PC-9 (cell line): ENCODE measurements at regions of chr22 and their contacts with region 1.

Region 1: GRCh38 chr22:35589071-35589952 is 27.8 kb downstream of the MB start:
- DNase-seq: peak; percentile 96 to 100
- H3K4me3 ChIP-seq: peak overlapping the region; percentile 62; the same call in 1 of the 2 replicates
- H3K27ac ChIP-seq: peak overlapping the region; percentile 98
- H3K4me1 ChIP-seq: peaks cover 90% of the 10 kb centered on the region
- H3K27me3 ChIP-seq: no peaks in the 10 kb centered on the region
- CTCF ChIP-seq: no peak

Region 2: GRCh38 chr22:35299673-35300497 is 289.4 kb before region 1 on chr22 and contains the start of gene TOM1:
- CTCF ChIA-PET with region 1: no interaction called
- POLR2A ChIA-PET with region 1: no interaction called
- intact Hi-C with region 1: loop called (anchors 1 kb)
- DNase-seq: peak; percentile 96
- H3K4me3 ChIP-seq: peak within 1 kb of the TSS; percentile 75
- H3K27ac ChIP-seq: peak within 1 kb of the TSS; percentile 91
- H3K4me1 ChIP-seq: peaks cover 30% of the 10 kb centered on the region
- H3K27me3 ChIP-seq: no peaks in the 10 kb centered on the region
- CTCF ChIP-seq: no peak
- total RNA-seq, gene TOM1: 43.6 and 45.1 TPM in 2 replicates

Region 3: DNA sequence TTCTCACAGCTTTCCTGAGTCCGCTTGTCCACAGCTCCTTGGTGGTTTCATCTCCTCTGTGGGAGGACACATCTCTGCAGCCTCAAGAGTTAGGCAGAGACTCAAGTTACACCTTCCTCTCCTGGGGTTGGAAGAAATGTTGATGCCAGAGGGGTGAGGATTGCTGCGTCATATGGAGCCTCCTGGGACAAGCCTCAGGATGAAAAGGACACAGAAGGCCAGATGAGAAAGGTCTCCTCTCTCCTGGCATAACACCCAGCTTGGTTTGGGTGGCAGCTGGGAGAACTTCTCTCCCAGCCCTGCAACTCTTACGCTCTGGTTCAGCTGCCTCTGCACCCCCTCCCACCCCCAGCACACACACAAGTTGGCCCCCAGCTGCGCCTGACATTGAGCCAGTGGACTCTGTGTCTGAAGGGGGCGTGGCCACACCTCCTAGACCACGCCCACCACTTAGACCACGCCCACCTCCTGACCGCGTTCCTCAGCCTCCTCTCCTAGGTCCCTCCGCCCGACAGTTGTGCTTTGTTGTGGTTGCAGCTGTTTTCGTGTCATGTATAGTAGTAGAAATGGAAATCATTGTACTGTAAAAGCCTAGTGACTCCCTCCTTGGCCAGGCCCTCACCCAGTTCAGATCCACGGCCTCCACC is 37.0 kb before region 1 on chr22:
- CTCF ChIA-PET with region 1: no interaction called
- POLR2A ChIA-PET with region 1: no interaction called
- intact Hi-C with region 1: no loop called
- DNase-seq: peak in 1 of 2 experiments; percentile 51
- H3K4me3 ChIP-seq: no peak overlapping the region
- H3K27ac ChIP-seq: no peak overlapping the region
- H3K4me1 ChIP-seq: no peaks in the 10 kb centered on the region
- H3K27me3 ChIP-seq: no peaks in the 10 kb centered on the region
- CTCF ChIP-seq: no peak

Region 4: GRCh38 chr22:35601743-35602630 is 12.7 kb after region 1 on chr22:
- CTCF ChIA-PET with region 1: no interaction called
- POLR2A ChIA-PET with region 1: interaction called, 3 read pairs
- intact Hi-C with region 1: loop called (anchors 1 kb)
- DNase-seq: peak; percentile 91 to 100
- H3K4me3 ChIP-seq: no peak overlapping the region
- H3K27ac ChIP-seq: peak overlapping the region; percentile 91
- H3K4me1 ChIP-seq: peaks cover 65% of the 10 kb centered on the region
- H3K27me3 ChIP-seq: no peaks in the 10 kb centered on the region
- CTCF ChIP-seq: no peak

Region 5: GRCh38 chr22:35611891-35612576 is 22.7 kb after region 1 on chr22:
- CTCF ChIA-PET with region 1: no interaction called
- POLR2A ChIA-PET with region 1: no interaction called
- intact Hi-C with region 1: no loop called
- DNase-seq: peak in 1 of 2 experiments; percentile 92
- H3K4me3 ChIP-seq: no peak overlapping the region
- H3K27ac ChIP-seq: peak overlapping the region; percentile 79
- H3K4me1 ChIP-seq: peaks cover 38% of the 10 kb centered on the region
- H3K27me3 ChIP-seq: no peaks in the 10 kb centered on the region
- CTCF ChIP-seq: no peak

Region 6: DNA sequence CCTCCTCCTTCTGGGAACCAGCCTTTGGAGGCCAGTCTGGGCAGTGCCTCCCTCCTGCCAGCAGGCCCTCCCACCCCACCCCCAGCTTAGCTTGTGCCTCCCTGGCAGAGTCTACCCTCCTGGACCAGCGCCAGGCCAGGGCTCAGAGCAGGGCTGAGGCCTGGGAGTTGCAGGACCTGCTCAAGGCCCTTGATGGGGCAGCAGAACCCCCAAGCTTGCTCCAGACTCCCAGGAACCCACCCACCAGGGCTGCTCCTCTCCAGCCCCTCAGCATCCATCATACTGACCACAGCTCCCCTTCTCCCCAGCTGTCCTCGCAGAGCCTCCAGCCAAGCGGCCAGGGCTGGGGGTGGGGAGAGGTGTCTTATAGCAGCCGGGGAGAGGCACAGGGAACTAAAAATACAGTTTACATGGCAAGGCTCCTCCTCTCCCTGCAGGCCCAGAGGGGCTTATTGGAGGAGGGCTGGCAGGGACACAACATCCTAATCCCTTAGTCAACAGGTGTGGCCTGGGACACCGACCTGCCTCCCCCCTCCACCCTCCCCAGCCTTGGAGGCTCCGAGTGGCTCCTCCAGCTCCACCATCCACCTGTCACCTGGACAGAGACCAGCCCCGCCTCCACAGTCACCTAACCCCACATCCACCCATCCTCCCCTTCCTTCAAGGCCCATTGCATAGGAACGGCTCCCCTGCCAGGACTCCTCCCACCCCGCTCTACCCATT is 33.0 kb after region 1 on chr22:
- CTCF ChIA-PET with region 1: interaction called, 7 read pairs
- POLR2A ChIA-PET with region 1: interaction called, 10 read pairs
- intact Hi-C with region 1: loop called (anchors 1 kb)
- DNase-seq: peak; percentile 96 to 99
- H3K4me3 ChIP-seq: peak overlapping the region; percentile 48; the same call in 1 of the 2 replicates
- H3K27ac ChIP-seq: peak overlapping the region; percentile 83
- H3K4me1 ChIP-seq: peaks cover 44% of the 10 kb centered on the region
- H3K27me3 ChIP-seq: no peaks in the 10 kb centered on the region
- CTCF ChIP-seq: no peak

Region 7: GRCh38 chr22:35785181-35785923 is 196.0 kb after region 1 on chr22:
- CTCF ChIA-PET with region 1: no interaction called
- POLR2A ChIA-PET with region 1: no interaction called
- intact Hi-C with region 1: loop called (anchors 1 kb)
- DNase-seq: no peak
- H3K4me3 ChIP-seq: no peak overlapping the region
- H3K27ac ChIP-seq: peak overlapping the region; percentile 94
- H3K4me1 ChIP-seq: peaks cover 34% of the 10 kb centered on the region
- H3K27me3 ChIP-seq: no peaks in the 10 kb centered on the region
- CTCF ChIP-seq: no peak

Region 8: DNA sequence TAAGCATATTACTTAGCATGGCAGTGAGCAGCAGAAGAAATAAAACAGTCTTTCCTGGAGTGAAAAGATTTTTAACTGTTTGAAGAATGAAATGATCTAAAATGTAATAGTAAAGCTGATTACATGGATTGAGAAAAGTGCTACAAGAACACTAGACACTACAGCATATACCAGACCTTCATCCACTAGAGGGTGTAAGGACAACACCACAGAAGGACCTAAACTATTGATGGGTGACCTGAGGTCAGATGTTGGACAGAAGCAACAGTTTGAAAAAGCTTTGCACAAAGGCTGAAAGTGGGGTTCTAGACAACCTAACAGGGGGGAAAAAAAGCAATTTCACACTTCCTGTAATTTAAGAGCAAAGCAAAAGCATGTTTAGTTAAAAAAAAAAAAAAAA is 341.6 kb after region 1 on chr22:
- CTCF ChIA-PET with region 1: no interaction called
- POLR2A ChIA-PET with region 1: interaction called, 24 read pairs
- intact Hi-C with region 1: no loop called
- DNase-seq: peak; percentile 3 to 48
- H3K4me3 ChIP-seq: no peak overlapping the region
- H3K27ac ChIP-seq: no peak overlapping the region
- H3K4me1 ChIP-seq: no peaks in the 10 kb centered on the region
- H3K27me3 ChIP-seq: no peaks in the 10 kb centered on the region
- CTCF ChIP-seq: peak; percentile 73

Region 9: DNA sequence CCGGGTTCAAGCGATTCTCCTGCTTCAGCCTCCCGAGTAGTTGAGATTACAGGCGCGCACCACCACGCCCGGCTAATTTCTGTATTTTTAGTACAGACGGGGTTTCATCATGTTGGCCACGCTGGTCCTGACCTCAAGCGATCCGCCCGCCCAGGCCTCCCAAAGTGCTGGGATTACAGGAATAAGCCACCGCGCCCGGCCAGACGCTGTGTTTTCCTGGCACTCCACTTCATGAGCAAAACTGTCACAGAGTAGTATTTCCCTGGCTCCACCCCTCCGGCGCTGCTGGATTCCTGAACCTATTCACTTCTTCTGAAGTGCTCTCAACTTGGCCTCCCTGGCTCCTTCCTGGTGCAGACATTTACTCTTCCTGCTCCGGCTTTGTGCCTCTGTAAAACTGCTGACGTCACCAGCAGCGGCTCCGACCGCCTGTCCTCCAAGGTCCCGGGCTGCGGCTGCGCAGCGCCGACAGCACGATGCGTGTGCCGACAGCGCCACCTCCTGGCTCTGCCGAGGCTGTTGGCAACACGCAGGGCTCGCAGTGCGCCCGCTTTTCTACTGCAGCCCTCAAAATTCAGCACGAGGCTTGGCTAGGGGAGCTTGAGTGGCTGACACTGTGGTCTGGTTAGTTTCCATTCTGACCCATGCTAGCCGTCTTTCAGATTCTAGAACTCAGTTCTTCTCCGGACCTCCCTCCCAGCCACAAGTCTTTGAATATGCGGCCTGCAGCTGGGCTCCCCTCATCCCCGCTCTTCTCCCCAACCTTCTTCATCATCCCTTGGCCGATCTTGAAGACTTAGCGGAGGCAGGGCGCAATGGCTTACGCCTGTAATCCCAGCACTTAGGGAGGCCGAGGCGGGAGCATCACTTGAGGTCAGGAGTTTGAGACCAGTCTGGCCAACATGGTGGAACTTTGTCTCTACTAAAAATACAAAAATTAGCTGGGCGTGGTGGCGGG is 534.6 kb after region 1 on chr22:
- CTCF ChIA-PET with region 1: no interaction called
- POLR2A ChIA-PET with region 1: no interaction called
- intact Hi-C with region 1: loop called (anchors 2 kb)
- DNase-seq: peak; percentile 94 to 97
- H3K4me3 ChIP-seq: peak overlapping the region; percentile 50
- H3K27ac ChIP-seq: peak overlapping the region; percentile 76
- H3K4me1 ChIP-seq: peaks cover 8% of the 10 kb centered on the region
- H3K27me3 ChIP-seq: 0 out of 2 replicates have a peak, but pooled peaks cover 3% of the 10 kb centered on the region
- CTCF ChIP-seq: peak; percentile 99